ENCODE measurements at regions of chr10 and their contacts with region 1.

Region 1: DNA sequence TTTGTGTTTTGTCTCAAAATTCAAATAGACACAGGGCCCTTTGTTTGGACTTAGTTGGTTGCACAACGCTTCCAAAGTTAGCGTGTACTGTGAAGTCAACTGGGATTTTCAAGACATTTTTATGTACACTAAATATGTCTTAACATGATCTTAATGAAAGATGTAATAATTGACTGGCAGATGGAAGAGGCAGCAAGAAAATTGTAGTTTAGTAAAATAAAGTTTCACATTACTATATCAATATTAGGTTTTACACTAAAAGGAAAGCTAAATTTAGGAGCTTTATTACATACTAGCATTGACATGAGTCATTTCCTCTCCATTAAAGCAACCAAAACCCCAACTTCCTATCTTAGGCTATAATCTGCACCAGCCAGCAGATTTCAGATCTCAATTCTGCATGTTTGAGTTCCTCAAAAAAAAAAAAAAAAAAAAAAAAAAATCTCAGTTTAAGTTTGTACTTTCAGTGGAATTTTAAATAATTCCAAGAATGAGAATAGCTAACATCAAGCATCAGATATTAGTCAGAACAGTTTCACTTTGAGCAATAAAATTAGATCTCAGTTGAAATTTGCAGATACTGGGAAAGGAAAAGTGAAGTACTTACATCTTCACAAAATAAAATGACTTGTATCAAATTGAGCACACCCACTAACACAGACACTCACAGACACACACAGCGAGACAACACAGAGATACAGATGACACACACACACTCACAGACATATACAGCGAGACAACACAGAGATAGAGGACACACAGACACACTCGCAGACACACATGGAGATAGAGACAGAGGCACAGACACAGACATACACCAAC is 346.6 kb upstream of the KLF6 start:
- DNase-seq: peak; percentile 37
- H3K4me3 Mint-ChIP-seq: no peak overlapping the region
- H3K27ac Mint-ChIP-seq: no peak overlapping the region
- H3K4me1 Mint-ChIP-seq: peaks cover 46% of the 10 kb centered on the region
- H3K27me3 Mint-ChIP-seq: no peaks in the 10 kb centered on the region

Region 2: DNA sequence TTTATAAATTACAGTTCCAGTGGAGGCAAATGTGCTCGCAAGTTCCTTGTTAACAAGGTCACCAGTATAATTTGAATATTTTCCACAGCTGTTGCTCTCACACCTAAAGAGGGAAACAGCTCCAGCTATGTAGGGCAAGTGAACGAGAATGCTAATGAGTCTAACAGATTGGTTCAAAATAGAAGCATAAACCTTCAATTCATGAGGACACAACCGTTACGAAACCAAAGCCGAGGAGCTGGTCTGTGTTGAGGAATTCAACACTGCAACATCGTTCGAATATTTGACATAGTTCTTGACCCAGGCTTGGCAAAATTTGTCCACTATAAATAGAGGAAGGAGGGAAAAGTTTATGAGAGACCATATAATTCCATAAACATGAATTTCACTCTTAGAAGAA is 507.9 kb before region 1 on chr10:
- intact Hi-C with region 1: loop called (anchors 2 kb)
- DNase-seq: no peak
- H3K4me3 Mint-ChIP-seq: no peak overlapping the region
- H3K27ac Mint-ChIP-seq: no peak overlapping the region
- H3K4me1 Mint-ChIP-seq: peaks cover 28% of the 10 kb centered on the region
- H3K27me3 Mint-ChIP-seq: peaks cover 17% of the 10 kb centered on the region

Region 3: GRCh38 chr10:3935141-3935540 is 196.5 kb before region 1 on chr10:
- intact Hi-C with region 1: loop called (anchors 2 kb)
- DNase-seq: peak; percentile 71
- H3K4me3 Mint-ChIP-seq: peak overlapping the region; percentile 43
- H3K27ac Mint-ChIP-seq: peak overlapping the region; percentile 92
- H3K4me1 Mint-ChIP-seq: peaks cover 58% of the 10 kb centered on the region
- H3K27me3 Mint-ChIP-seq: no peaks in the 10 kb centered on the region

Region 4: DNA sequence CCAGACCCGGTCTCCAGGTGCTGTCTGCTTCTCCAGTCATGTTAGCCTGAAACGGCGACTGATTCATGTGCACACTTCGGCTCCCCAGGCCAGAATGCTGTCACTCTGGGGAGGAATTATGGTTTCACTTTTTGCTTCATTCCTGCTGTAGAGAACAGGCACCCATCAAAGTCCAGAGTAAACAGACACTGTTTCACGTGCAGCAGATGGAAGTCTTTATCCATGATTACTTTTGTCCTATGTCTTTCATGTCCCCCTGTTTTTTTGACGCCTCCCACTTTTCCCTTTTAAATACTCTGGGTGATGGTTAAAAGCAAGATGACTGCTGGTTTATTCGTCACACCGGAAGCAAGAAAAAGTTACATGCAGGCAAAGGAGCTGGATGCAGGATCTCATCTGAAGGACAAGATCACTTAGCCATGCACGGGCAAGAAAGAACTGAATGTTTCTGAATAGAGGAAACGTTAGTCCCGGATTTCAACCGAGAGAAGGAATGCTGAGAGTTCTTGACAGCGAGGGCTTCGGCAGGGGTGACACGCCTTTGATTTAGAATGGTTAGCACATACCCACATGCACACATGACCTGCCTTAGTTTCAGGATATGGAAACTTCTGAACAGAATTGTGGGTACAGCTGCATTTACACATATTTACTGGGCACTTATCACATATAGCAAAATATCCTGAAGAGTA is 96.6 kb before region 1 on chr10:
- intact Hi-C with region 1: loop called (anchors 1 kb)
- DNase-seq: peak; percentile 15
- H3K4me3 Mint-ChIP-seq: peak overlapping the region; percentile 61
- H3K27ac Mint-ChIP-seq: peak overlapping the region; percentile 84
- H3K4me1 Mint-ChIP-seq: peaks cover 36% of the 10 kb centered on the region
- H3K27me3 Mint-ChIP-seq: peaks cover 2% of the 10 kb centered on the region

Region 5: GRCh38 chr10:4073912-4074311 is 57.7 kb before region 1 on chr10:
- intact Hi-C with region 1: loop called (anchors 2 kb)
- DNase-seq: no peak
- H3K4me3 Mint-ChIP-seq: no peak overlapping the region
- H3K27ac Mint-ChIP-seq: peak overlapping the region; percentile 36
- H3K4me1 Mint-ChIP-seq: peaks cover 41% of the 10 kb centered on the region
- H3K27me3 Mint-ChIP-seq: no peaks in the 10 kb centered on the region

Region 6: DNA sequence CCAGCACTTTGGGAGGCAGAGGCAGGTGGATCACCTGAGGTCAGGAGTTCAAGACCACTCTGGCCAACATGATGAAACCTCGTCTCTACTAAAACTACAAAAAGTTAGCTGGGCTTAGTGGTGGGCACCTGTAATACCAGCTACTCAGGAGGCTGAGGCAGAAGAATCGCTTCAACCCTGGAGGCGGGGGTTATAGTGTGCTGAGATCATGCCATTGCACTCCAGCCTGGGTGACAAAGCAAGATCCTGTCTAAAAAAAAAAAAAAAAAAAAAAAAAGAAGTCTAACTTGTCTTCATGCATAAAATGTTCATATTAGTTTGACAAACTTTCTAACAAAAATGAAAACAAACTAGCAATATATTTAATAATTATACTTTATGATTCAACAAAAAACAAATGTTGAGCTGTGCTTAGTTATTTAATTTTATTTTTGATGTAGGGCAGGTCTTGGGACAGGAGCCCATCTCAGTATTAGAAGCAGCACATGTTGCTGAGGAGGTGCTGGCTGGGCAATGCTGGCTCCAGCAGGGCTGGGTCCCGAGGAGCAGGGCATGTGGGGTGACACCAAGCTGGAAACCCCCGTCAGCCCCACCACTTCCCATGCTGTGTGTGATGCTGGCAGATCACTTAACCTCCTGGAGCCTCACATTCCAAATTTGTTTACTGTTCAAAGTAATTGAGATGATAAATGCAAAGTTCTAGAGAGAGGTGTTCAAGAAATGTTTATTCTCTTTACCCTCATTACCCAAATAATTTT is 11.3 kb before region 1 on chr10:
- intact Hi-C with region 1: no loop called
- DNase-seq: no peak
- H3K4me3 Mint-ChIP-seq: no peak overlapping the region
- H3K27ac Mint-ChIP-seq: no peak overlapping the region
- H3K4me1 Mint-ChIP-seq: peaks cover 11% of the 10 kb centered on the region
- H3K27me3 Mint-ChIP-seq: peaks cover 12% of the 10 kb centered on the region

Region 7: DNA sequence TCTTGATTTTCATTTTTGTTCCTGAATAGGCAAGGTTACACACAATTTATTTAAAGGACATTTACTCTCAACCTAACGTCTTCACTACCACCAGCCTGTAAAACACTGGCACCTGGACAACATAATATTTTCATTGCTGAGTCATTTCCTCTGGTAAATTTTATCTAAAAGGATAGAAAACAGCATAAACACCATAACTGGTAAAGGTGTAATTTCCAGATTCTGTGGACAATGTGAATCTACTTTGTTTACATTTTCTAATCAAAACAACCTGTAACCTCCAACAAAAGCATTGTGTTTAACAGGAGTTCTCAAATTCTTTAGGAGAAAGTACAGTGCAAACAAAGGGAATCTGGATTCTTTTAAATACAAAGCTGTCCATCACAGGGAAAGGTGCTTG is 222.3 kb after region 1 on chr10:
- intact Hi-C with region 1: loop called (anchors 5 kb)
- DNase-seq: no peak
- H3K4me3 Mint-ChIP-seq: no peak overlapping the region
- H3K27ac Mint-ChIP-seq: peak overlapping the region; percentile 40
- H3K4me1 Mint-ChIP-seq: peaks cover 23% of the 10 kb centered on the region
- H3K27me3 Mint-ChIP-seq: peaks cover 3% of the 10 kb centered on the region